ENCODE measurements at regions of chr7 and their contacts with region 1.

Region 1: GRCh38 chr7:7438851-7439250 is 96.8 kb downstream of the COL28A1 start:
- DNase-seq: peak; percentile 78 to 94
- ATAC-seq: peak; percentile 100
- H3K4me3 ChIP-seq: no peak overlapping the region
- H3K27ac ChIP-seq: peak overlapping the region; percentile 71 to 85
- H3K4me1 ChIP-seq: peaks cover 27% of the 10 kb centered on the region
- CTCF ChIP-seq: no peak
- EP300 ChIP-seq: peak; percentile 75 to 76; a peak in 2 of 5 replicates
- POLR2A ChIP-seq: no peak
- RAD21 ChIP-seq: peak; percentile 19 to 48; a peak in 4 of 5 replicates

Region 2: DNA sequence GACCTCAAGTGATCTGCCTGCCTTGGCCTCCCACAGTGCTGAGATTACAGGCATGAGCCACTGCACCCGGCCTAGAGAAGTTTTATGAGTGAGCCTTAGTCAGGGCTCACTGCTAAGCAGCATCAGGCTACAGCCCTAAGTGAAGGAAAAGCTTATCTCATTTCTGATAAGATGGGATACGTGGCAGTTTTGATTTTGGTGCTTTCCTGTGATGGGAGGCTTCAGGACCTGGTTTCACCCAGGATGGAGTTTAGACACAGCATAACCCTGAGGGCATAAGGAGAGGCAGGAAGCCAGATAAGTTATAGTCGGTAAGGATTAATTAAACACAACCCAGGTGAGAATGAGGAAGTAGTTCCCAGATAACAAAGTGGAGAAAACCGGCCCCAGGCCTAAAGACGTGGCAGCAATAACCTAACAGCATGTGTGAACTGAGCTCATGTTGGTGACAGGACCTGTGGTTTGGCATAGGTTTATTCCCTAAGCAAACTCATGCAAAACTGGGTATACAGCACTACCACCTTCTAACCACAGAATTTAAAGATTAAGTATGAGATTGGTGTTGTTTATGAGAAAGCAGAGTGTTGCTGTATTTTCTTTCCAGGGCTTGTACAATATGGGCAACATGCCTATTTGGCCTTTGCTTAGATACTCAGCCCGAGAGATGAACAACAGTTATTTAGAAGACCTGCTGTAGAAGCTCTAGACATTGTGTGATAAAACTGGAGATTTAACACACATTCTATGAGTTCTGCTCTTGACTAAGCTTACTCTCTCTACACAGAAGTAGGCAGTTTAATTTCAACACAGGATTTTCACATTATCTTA is 22.6 kb before region 1 on chr7:
- CTCF ChIA-PET with region 1: no interaction called
- POLR2A ChIA-PET with region 1: no interaction called
- DNase-seq: no peak
- ATAC-seq: no peak
- H3K4me3 ChIP-seq: no peak overlapping the region
- H3K27ac ChIP-seq: no peak overlapping the region
- H3K4me1 ChIP-seq: no peaks in the 10 kb centered on the region
- CTCF ChIP-seq: no peak
- EP300 ChIP-seq: no peak
- POLR2A ChIP-seq: no peak
- RAD21 ChIP-seq: no peak

Region 3: GRCh38 chr7:7452119-7452518 is 13.3 kb after region 1 on chr7:
- CTCF ChIA-PET with region 1: interaction called, 12 read pairs
- POLR2A ChIA-PET with region 1: no interaction called
- DNase-seq: no peak
- ATAC-seq: no peak
- H3K4me3 ChIP-seq: no peak overlapping the region
- H3K27ac ChIP-seq: no peak overlapping the region
- H3K4me1 ChIP-seq: peaks cover 12% of the 10 kb centered on the region
- CTCF ChIP-seq: no peak
- EP300 ChIP-seq: no peak
- POLR2A ChIP-seq: no peak
- RAD21 ChIP-seq: no peak

Region 4: GRCh38 chr7:7489546-7489945 is 50.7 kb after region 1 on chr7:
- CTCF ChIA-PET with region 1: no interaction called
- POLR2A ChIA-PET with region 1: interaction called, 26 read pairs
- DNase-seq: peak in 1 of 2 experiments; percentile 6
- ATAC-seq: no peak
- H3K4me3 ChIP-seq: no peak overlapping the region
- H3K27ac ChIP-seq: peak overlapping the region; percentile 45 to 84; a peak in 4 of 6 replicates
- H3K4me1 ChIP-seq: peaks cover 41% of the 10 kb centered on the region
- CTCF ChIP-seq: no peak
- EP300 ChIP-seq: no peak
- POLR2A ChIP-seq: no peak
- RAD21 ChIP-seq: no peak

Region 5: GRCh38 chr7:7816084-7816483 is 377.2 kb after region 1 on chr7:
- CTCF ChIA-PET with region 1: no interaction called
- POLR2A ChIA-PET with region 1: no interaction called
- DNase-seq: no peak
- ATAC-seq: no peak
- H3K4me3 ChIP-seq: no peak overlapping the region
- H3K27ac ChIP-seq: no peak overlapping the region
- H3K4me1 ChIP-seq: peaks cover 6% of the 10 kb centered on the region; the same call in 1 of the 3 replicates
- CTCF ChIP-seq: no peak
- EP300 ChIP-seq: no peak
- POLR2A ChIP-seq: no peak
- RAD21 ChIP-seq: no peak